GM12878 (cell line): ENCODE measurements at regions of chr3 and their contacts with region 1.

Region 1: DNA sequence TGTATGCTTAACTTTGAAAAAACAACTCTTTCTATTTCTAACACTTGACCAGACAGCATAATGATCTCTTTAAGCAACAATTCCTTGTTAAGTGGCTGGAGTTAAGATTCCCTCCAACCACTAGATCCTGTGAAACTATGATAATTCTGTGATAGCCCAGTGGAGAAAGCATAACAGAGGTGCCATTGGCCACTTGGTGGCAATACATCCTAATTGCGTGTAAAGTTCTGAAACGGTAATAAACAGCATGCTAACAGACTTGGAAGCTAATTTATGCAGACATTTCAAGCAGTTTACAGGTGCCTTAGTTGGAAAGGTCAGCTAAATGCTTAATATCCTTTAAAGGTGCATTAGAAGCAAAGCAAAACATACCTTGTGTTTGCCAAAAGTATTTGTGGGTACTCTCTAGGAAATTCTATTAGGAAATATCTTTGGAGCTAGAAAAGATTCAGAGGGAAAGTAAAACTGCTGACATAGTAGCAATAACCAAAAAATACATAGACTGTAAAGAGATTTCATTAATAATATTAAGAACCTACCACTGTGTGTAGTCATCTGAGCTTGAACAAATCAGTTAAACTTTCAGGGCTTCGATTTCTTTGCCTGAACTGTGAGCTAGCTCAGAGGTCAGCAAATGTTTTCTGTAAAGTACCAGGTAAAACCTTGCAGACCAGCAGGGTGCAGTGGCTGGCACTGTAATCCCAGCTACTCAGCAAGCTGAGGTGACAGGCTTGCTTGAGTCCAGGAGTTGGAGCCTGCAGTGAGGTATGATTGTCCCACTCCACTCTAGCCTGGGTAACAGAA is 19.0 kb upstream of the CSTA start:
- DNase-seq: no peak
- ATAC-seq: peak; percentile 93
- H3K4me3 ChIP-seq: no peak overlapping the region
- H3K27ac ChIP-seq: no peak overlapping the region
- H3K4me1 ChIP-seq: peaks cover 30% of the 10 kb centered on the region
- H3K27me3 ChIP-seq: no peaks in the 10 kb centered on the region
- CTCF ChIP-seq: peak; percentile 30 to 57 (median 35); a peak in 4 of 6 replicates
- EP300 ChIP-seq: no peak
- POLR2A ChIP-seq: no peak
- RAD21 ChIP-seq: peak; percentile 62

Region 2: DNA sequence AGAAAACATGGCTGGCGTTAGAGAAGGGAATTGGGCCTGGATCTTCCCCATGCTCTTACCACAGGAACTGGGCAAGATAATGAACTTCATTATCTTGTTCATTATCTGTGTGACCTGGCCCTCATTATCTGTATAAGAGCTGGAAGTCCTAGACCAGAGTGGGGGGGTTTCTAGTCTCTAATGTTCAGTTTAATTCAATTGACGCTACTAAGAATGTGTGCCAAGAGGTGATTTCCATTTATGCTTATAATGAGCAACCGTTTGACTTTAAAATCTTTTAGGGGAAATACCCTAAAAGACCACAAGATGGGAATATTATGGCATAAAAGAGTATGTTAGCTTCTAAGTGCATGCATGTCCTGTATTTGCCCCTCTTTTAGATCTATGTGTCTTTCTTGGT is 40.1 kb before region 1 on chr3:
- CTCF ChIA-PET with region 1: interaction called, 16 read pairs
- POLR2A ChIA-PET with region 1: interaction called, 5 read pairs
- RAD21 ChIA-PET with region 1: interaction called, 41 read pairs
- SMC1A ChIA-PET with region 1: interaction called, 204 read pairs
- in situ Hi-C with region 1: no loop called
- intact Hi-C with region 1: no loop called
- DNase-seq: no peak
- ATAC-seq: peak; percentile 11; the same call in 2 of the 3 replicates
- H3K4me3 ChIP-seq: no peak overlapping the region
- H3K27ac ChIP-seq: peak overlapping the region; percentile 43; the same call in 1 of the 2 replicates
- H3K4me1 ChIP-seq: peaks cover 26% of the 10 kb centered on the region
- H3K27me3 ChIP-seq: no peaks in the 10 kb centered on the region
- CTCF ChIP-seq: 0 out of 6 replicates have a peak, but pooled peaks of 1 of the 3 experiments have one; percentile 3
- EP300 ChIP-seq: 0 out of 4 replicates have a peak, but pooled peaks of 1 of the 2 experiments have one; percentile 11
- POLR2A ChIP-seq: no peak
- RAD21 ChIP-seq: peak; percentile 38; the same call in 1 of the 2 replicates

Region 3: DNA sequence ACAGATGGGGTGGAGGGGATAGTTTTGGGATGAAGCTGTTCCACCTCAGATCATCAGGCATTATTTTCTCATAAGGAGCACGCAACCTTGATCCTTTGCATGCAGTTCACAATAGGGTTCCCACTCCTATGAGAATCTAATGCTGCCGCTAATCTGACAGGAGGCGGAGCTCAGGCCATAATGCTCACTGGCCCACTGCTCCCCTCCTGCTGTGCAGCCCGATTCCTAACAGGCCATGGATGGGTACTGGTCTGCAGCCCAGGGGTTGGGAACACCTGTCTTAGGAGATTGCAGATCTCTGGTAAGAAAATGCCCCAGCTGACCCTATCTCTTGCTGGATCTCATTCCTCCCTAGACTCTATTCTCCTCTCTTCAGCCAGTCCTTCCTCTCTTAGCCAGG is 25.9 kb after region 1 on chr3:
- CTCF ChIA-PET with region 1: interaction called, 23 read pairs
- POLR2A ChIA-PET with region 1: no interaction called
- RAD21 ChIA-PET with region 1: interaction called, 17 read pairs
- SMC1A ChIA-PET with region 1: interaction called, 25 read pairs
- in situ Hi-C with region 1: no loop called
- intact Hi-C with region 1: no loop called
- DNase-seq: no peak
- ATAC-seq: no peak
- H3K4me3 ChIP-seq: no peak overlapping the region
- H3K27ac ChIP-seq: no peak overlapping the region
- H3K4me1 ChIP-seq: peaks cover 5% of the 10 kb centered on the region
- H3K27me3 ChIP-seq: no peaks in the 10 kb centered on the region
- CTCF ChIP-seq: no peak
- EP300 ChIP-seq: no peak
- POLR2A ChIP-seq: no peak
- RAD21 ChIP-seq: no peak

Region 4: DNA sequence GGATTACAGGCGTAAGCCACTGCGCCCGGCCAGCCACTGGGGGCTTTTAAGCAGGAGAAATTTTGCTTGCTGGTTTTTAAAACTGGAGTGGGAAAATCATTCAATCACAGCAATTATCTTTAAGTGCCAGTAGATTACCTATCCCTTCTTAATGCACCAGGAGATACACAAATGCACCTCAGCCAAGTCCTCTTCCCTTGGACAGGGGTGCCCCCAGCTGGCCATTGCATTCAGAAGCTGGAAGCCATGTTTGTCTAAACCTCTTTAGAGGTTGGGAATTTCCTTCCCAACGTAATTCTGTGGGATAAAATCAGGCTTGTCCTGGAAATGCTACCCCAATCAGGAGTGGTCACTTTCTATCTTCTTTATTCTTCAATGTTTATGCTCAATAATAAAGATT is 50.4 kb after region 1 on chr3:
- CTCF ChIA-PET with region 1: interaction called, 192 read pairs
- POLR2A ChIA-PET with region 1: interaction called, 4 read pairs
- RAD21 ChIA-PET with region 1: interaction called, 114 read pairs
- SMC1A ChIA-PET with region 1: interaction called, 191 read pairs
- in situ Hi-C with region 1: no loop called
- intact Hi-C with region 1: loop called (anchors 1 kb)
- DNase-seq: no peak
- ATAC-seq: peak; percentile 72
- H3K4me3 ChIP-seq: no peak overlapping the region
- H3K27ac ChIP-seq: no peak overlapping the region
- H3K4me1 ChIP-seq: no peaks in the 10 kb centered on the region
- H3K27me3 ChIP-seq: no peaks in the 10 kb centered on the region
- CTCF ChIP-seq: peak; percentile 49 to 80 (median 51); a peak in 4 of 6 replicates
- EP300 ChIP-seq: no peak
- POLR2A ChIP-seq: no peak
- RAD21 ChIP-seq: peak; percentile 93

Region 5: DNA sequence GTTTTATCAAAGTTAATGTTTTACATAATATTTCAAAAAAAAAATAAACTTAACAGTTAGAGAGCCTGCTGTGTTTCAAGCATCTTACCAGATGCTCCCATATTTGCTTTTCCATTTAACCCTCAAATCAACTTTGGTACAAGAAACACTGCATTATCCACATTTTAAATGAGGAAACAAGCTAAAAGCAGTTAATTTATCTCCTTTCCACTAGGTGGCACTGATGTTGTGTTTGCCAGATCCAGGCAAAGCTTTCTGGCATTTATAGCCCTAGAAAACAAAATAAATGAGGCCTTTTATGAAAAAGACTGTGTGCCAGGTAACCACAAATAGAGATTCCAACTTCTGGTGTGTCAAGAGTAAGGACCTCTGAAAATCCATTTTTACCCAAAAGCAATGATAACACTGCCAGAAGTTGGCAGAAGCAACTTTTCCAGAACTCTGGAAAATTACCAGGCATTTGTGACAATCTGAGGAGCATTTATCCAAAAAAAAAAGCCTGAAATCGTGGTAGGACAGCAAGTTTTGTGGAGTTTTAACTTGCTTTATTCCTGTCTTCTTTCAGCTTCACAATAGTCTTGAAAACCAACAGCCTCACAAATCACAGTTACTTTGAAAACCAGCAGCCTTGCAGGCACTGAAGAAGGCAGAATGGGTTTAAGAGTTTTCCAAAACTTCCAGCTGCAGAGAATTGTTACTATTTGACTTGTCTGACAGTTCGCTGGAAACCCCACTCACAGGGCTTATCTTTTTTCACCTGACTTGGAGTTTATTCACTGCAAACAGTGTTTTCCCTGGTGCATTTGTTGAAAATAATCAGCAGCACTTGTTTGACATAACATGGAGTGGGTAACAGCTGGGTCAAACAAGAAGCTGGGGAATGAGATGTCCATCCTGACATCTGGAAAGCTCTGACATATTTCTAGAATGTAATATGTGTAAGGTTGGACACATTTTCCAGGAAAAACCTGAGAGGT is 87.1 kb after region 1 on chr3:
- CTCF ChIA-PET with region 1: interaction called, 72 read pairs
- POLR2A ChIA-PET with region 1: interaction called, 13 read pairs
- RAD21 ChIA-PET with region 1: interaction called, 32 read pairs
- SMC1A ChIA-PET with region 1: interaction called, 55 read pairs
- in situ Hi-C with region 1: no loop called
- intact Hi-C with region 1: no loop called
- DNase-seq: no peak
- ATAC-seq: peak; percentile 59
- H3K4me3 ChIP-seq: no peak overlapping the region
- H3K27ac ChIP-seq: no peak overlapping the region
- H3K4me1 ChIP-seq: no peaks in the 10 kb centered on the region; the same call in 1 of the 2 replicates
- H3K27me3 ChIP-seq: no peaks in the 10 kb centered on the region
- CTCF ChIP-seq: peak; percentile 52 to 77 (median 75); a peak in 5 of 6 replicates
- EP300 ChIP-seq: no peak
- POLR2A ChIP-seq: no peak
- RAD21 ChIP-seq: peak; percentile 88

Region 6: GRCh38 chr3:122443090-122443489 is 137.1 kb after region 1 on chr3:
- CTCF ChIA-PET with region 1: no interaction called
- POLR2A ChIA-PET with region 1: no interaction called
- RAD21 ChIA-PET with region 1: no interaction called
- SMC1A ChIA-PET with region 1: no interaction called
- in situ Hi-C with region 1: no loop called
- intact Hi-C with region 1: no loop called
- DNase-seq: no peak
- ATAC-seq: no peak
- H3K4me3 ChIP-seq: no peak overlapping the region
- H3K27ac ChIP-seq: no peak overlapping the region
- H3K4me1 ChIP-seq: no peaks in the 10 kb centered on the region
- H3K27me3 ChIP-seq: no peaks in the 10 kb centered on the region
- CTCF ChIP-seq: no peak
- EP300 ChIP-seq: no peak
- POLR2A ChIP-seq: no peak
- RAD21 ChIP-seq: no peak